ENCODE measurements at regions of chr14 and their contacts with region 1.

Region 1: GRCh38 chr14:72948481-72949138 is 22.3 kb downstream of the DCAF4 start:
- DNase-seq: peak; percentile 35
- ATAC-seq: peak; percentile 74
- H3K4me3 ChIP-seq: no peak overlapping the region
- H3K27ac ChIP-seq: no peak overlapping the region
- H3K4me1 ChIP-seq: no peaks in the 10 kb centered on the region
- H3K27me3 ChIP-seq: no peaks in the 10 kb centered on the region
- CTCF ChIP-seq: peak; percentile 89

Region 2: GRCh38 chr14:72516936-72517700 is 431.5 kb before region 1 on chr14:
- CTCF ChIA-PET with region 1: interaction called, 12 read pairs
- POLR2A ChIA-PET with region 1: no interaction called
- in situ Hi-C with region 1: no loop called
- intact Hi-C with region 1: loop called (anchors 2 kb)
- DNase-seq: peak; percentile 59
- ATAC-seq: peak; percentile 78
- H3K4me3 ChIP-seq: no peak overlapping the region
- H3K27ac ChIP-seq: no peak overlapping the region
- H3K4me1 ChIP-seq: no peaks in the 10 kb centered on the region
- H3K27me3 ChIP-seq: peaks cover 3% of the 10 kb centered on the region; the same call in 1 of the 2 replicates
- CTCF ChIP-seq: peak; percentile 87

Region 3: DNA sequence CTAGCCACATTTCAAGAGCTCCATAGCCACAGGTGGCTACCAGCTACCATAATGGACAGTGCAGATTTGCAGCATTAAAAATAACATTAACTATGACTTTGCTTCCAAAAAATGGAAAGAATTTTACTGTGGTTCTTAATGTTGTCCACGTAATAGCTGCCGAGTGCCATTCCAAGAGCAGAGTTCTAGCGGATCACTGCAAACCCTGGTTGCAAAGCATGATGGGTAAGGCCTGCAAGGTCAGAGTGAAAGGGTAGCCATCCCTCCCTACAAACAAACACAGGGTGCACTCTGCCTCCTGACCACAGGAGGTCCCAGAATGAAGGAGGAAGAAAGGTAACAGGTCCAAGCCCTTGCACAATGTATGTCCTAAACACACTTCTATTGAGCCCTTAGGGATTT is 212.3 kb before region 1 on chr14:
- CTCF ChIA-PET with region 1: no interaction called
- POLR2A ChIA-PET with region 1: no interaction called
- in situ Hi-C with region 1: no loop called
- intact Hi-C with region 1: no loop called
- DNase-seq: no peak
- ATAC-seq: no peak
- H3K4me3 ChIP-seq: no peak overlapping the region
- H3K27ac ChIP-seq: no peak overlapping the region
- H3K4me1 ChIP-seq: no peaks in the 10 kb centered on the region
- H3K27me3 ChIP-seq: peaks cover 3% of the 10 kb centered on the region; the same call in 1 of the 2 replicates
- CTCF ChIP-seq: no peak

Region 4: GRCh38 chr14:72916177-72916576 is 32.4 kb before region 1 on chr14:
- CTCF ChIA-PET with region 1: no interaction called
- POLR2A ChIA-PET with region 1: no interaction called
- in situ Hi-C with region 1: no loop called
- intact Hi-C with region 1: no loop called
- DNase-seq: no peak
- ATAC-seq: no peak
- H3K4me3 ChIP-seq: no peak overlapping the region
- H3K27ac ChIP-seq: no peak overlapping the region
- H3K4me1 ChIP-seq: no peaks in the 10 kb centered on the region
- H3K27me3 ChIP-seq: 0 out of 2 replicates have a peak, but pooled peaks cover 2% of the 10 kb centered on the region
- CTCF ChIP-seq: no peak

Region 5: DNA sequence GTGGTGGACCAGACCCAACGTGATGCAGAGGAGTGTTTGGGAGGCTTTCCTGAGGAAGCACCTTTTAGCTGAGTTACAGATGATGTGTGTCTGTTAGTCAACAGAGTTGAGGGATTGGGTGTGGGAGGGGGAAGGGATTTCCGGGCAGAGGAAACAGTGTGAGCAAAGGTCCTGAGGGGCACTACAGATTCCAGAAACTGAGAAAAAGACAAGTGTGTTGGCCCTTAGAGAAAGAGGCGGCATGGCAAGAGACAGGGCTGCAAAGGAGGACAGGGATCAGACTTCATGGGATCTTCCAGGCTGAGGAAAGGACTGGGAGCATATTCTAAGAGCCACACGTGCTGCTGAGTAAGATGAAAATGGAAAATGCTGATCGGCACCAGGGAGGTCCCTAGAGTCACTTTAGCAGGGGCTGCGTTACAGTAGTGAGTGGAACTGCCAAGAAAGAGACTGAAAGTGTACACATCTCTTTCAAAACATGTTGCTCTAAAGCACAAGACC is 1983.8 kb after region 1 on chr14:
- CTCF ChIA-PET with region 1: interaction called, 11 read pairs
- POLR2A ChIA-PET with region 1: no interaction called
- in situ Hi-C with region 1: no loop called
- intact Hi-C with region 1: no loop called
- DNase-seq: no peak
- ATAC-seq: peak; percentile 48; the same call in 1 of the 2 replicates
- H3K4me3 ChIP-seq: no peak overlapping the region
- H3K27ac ChIP-seq: no peak overlapping the region
- H3K4me1 ChIP-seq: no peaks in the 10 kb centered on the region; the same call in 1 of the 2 replicates
- H3K27me3 ChIP-seq: no peaks in the 10 kb centered on the region
- CTCF ChIP-seq: no peak